ENCODE measurements at regions of chr12 and their contacts with region 1.

Region 1: DNA sequence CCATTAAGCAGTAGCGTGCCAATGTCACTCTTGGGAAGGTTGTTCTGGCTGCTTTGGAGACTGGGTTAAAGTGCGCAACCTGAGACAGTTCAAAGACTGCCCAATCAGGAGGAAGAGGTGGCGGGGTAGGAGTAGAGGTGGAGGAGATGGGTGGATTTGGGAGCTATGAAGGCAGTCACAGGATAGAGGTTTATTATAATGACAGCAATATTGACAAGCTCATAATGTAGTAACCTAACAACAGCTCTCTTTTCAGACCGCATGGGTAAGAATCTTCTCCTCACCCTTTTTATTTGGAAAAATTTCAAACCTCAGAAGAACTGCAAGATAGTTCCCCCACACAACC is 5.3 kb upstream of the PSMD9 start:
- DNase-seq: peak; percentile 33 to 68
- H3K4me3 ChIP-seq: no peak overlapping the region
- H3K27ac ChIP-seq: peak overlapping the region; percentile 39
- H3K4me1 ChIP-seq: peaks cover 23% of the 10 kb centered on the region
- H3K27me3 ChIP-seq: no peaks in the 10 kb centered on the region
- CTCF ChIP-seq: no peak

Region 2: DNA sequence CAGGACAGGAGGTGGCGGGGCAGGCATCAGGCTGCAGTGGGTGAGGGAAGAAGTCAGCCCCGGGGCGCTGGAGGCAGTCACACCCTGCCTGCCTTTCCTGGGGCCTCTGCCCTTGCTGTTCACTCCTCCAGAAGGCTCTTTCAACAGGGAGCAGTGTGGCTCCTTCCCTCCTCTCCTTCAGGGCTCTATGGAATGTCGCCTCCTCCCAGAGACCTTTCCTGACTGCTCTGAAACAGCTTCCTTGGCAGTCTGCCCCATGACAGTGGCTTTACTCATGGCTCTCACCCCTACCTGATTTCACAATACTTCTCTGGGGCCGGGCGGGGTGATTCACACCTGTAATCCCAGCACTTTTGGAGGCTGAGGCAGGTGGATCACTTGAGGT is 96.9 kb before region 1 on chr12:
- CTCF ChIA-PET with region 1: no interaction called
- POLR2A ChIA-PET with region 1: interaction called, 19 read pairs
- intact Hi-C with region 1: no loop called
- DNase-seq: peak; percentile 96 to 98
- H3K4me3 ChIP-seq: no peak overlapping the region
- H3K27ac ChIP-seq: peak overlapping the region; percentile 100
- H3K4me1 ChIP-seq: peaks cover 88% of the 10 kb centered on the region
- H3K27me3 ChIP-seq: no peaks in the 10 kb centered on the region
- CTCF ChIP-seq: no peak

Region 3: GRCh38 chr12:121839106-121839992 is 43.9 kb before region 1 on chr12:
- CTCF ChIA-PET with region 1: interaction called, 3 read pairs
- POLR2A ChIA-PET with region 1: interaction called, 32 read pairs
- intact Hi-C with region 1: loop called (anchors 1 kb)
- DNase-seq: peak; percentile 91 to 100
- H3K4me3 ChIP-seq: peak overlapping the region; percentile 60
- H3K27ac ChIP-seq: no peak overlapping the region
- H3K4me1 ChIP-seq: no peaks in the 10 kb centered on the region; the same call in 1 of the 2 replicates
- H3K27me3 ChIP-seq: no peaks in the 10 kb centered on the region
- CTCF ChIP-seq: no peak; the same call in 1 of the 2 replicates